Left ventricle myocardium superior (tissue), 1 donor: ENCODE measurements at regions of chr6 and their contacts with region 1.

Region 1: DNA sequence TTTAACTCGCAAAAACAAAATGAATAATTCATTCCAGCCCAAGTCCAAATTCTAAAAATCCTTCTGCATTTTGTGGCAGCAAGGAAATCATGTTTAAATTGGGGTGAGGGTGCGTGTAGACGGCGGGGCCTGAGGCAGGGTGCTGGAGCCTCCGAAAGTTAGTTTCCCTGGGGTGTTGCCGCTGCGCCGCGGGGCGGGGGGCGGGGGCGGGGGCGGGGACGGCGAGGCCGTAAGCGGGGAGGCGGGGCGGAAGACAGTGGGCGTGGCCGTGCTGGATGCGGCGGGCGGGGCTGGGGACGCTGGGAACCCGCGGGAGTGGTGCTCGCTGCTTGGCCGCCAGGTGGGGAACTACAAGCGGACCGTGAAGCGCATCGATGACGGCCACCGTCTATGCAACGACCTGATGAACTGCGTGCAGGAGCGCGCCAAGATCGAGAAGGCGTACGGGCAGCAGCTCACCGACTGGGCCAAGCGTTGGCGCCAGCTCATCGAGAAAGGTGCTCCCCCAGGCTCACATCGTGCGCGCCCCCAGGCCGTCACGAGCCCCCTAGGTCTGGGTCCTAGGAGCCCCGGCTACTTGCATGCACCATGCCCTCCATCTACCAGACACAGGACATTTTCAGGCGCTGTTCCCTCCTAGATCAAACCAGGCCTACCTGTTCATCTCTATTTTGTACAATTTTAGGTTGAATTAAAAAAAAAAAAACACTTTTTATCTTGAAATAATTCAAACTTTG is 29.0 kb downstream of the SPDEF start:
- DNase-seq: peak; percentile 98
- ATAC-seq: peak; percentile 95

Region 2: DNA sequence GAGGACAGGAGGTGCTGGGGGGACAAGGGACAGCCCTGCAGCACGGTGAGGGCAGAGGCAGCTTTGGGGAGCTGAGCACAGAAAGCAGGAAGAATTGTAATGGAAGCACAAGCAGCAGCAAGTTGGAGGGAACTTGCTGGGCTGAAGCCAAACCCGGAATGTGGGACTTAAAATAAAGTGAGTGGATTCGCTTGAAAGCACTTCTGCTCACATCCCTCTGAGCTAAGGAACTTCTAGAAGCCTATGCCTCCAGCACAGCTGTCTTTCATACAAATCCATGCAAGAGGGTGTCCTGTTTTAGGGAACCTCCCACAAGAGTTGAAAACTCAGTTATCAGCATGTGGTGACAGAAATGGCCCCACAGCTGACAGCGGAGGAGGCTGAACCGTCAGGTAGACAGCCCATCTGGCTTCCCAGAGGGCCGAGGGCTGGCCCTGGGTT is 652.0 kb before region 1 on chr6:
- intact Hi-C with region 1: no loop called
- DNase-seq: peak; percentile 6
- ATAC-seq: no peak

Region 3: GRCh38 chr6:34305982-34306708 is 221.0 kb before region 1 on chr6:
- intact Hi-C with region 1: no loop called
- DNase-seq: no peak
- ATAC-seq: peak; percentile 68

Region 4: DNA sequence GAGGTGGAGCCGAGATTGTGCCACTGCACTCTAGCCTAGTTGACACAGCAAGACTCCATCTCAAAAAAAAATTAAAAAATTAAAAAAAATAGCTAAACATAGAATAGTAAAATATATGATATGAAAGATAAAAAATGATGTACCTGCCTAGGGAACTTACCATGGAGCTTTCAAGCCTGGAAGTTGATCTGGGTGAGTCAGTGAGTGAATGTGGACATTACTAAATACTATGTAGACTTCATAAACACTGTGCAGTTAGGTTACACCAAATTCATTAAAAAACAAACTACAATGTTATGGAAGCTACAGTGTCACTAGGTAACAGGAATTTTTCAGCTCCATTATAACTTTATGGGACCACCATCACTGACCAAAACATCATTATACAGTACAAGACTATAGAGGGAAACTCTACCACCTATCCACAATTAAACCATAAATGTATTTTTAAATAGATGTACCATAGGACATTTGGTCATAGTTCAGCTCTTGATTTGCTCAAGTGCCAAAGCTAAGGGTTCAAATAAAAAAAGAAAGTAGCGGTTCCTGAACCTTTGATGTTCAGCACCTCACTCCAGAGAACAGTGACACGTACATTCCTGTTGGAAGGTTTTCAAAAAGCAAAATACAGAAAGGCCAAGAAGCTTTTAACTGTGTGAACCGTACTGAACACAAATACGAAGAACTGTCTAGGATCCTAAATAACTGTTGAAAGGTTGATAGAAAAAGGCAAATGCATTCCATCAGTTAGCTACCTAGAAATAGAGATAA is 81.3 kb after region 1 on chr6:
- intact Hi-C with region 1: loop called (anchors 5 kb)
- DNase-seq: no peak
- ATAC-seq: peak; percentile 19